ENCODE measurements at regions of chr7 and their contacts with region 1.

Region 1: GRCh38 chr7:5683280-5683670 is 98.2 kb downstream of the RNF216 start:
- DNase-seq: no peak
- ATAC-seq: no peak
- H3K4me3 ChIP-seq: no peak overlapping the region
- H3K27ac ChIP-seq: no peak overlapping the region
- H3K4me1 ChIP-seq: peaks cover 4% of the 10 kb centered on the region; the same call in 1 of the 2 replicates
- H3K27me3 ChIP-seq: no peaks in the 10 kb centered on the region
- CTCF ChIP-seq: no peak

Region 2: DNA sequence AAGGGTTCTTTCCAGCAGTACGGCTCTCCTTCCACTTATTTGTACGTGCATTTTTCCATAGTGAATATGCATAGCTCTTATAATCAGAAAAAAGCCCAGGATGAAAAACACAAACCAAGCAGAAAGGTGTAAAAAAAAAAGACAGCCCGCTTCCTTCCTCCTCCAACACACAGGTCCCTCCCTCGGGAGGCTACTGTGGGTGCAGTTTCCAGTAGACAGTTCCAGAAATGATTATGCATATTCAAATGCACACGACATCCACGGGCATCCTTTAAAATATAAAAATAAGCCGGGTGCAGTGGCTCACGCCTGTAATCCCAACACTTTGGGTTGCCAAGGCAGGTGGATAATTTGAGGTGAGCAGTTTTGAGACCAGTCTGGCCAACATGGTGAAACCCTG is 319.5 kb before region 1 on chr7:
- CTCF ChIA-PET with region 1: no interaction called
- POLR2A ChIA-PET with region 1: no interaction called
- in situ Hi-C with region 1: no loop called
- intact Hi-C with region 1: no loop called
- DNase-seq: no peak
- ATAC-seq: no peak
- H3K4me3 ChIP-seq: no peak overlapping the region
- H3K27ac ChIP-seq: no peak overlapping the region
- H3K4me1 ChIP-seq: peaks cover 7% of the 10 kb centered on the region
- H3K27me3 ChIP-seq: no peaks in the 10 kb centered on the region
- CTCF ChIP-seq: no peak

Region 3: DNA sequence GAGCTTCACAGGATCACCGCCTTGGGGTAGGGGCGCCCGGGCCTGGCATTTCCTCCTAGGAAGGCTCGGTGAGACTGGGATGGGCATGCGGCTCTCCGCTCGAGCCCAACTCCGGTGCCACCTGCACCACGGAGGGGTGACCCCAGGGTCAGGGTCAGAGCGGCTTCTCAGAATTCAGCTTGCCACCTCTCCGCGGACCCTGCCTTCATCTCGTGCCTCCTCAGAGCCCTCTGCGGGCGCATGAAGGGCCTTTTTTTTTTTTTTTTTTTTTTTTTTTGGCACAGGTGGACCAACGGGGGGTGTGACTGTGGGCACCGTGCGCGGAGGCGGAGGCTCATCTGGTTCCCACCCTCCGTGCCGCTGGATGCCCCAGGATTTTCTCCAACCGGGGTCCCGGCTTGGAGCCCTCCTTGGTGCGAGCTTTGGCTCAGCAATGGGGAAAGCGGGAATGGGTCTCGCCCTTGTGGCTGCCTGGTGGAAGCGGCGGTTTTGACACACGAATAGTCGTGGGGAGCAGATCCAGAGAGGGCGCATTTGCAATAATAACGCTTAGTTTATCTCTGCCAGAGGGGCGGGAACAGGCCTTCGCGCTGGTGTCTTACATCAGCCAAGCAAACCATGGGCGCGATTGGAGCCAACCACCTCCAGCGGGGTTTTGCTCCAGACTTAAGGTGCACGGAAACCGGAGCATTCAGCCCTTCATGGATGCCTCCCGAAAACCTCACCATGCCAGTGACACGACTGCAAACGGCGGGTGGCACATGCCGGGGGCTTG is 254.6 kb before region 1 on chr7:
- CTCF ChIA-PET with region 1: no interaction called
- POLR2A ChIA-PET with region 1: no interaction called
- in situ Hi-C with region 1: no loop called
- intact Hi-C with region 1: no loop called
- DNase-seq: no peak
- ATAC-seq: no peak
- H3K4me3 ChIP-seq: peak overlapping the region; percentile 89 to 98
- H3K27ac ChIP-seq: peak overlapping the region; percentile 99
- H3K4me1 ChIP-seq: peaks cover 8% of the 10 kb centered on the region
- H3K27me3 ChIP-seq: no peaks in the 10 kb centered on the region
- CTCF ChIP-seq: no peak

Region 4: DNA sequence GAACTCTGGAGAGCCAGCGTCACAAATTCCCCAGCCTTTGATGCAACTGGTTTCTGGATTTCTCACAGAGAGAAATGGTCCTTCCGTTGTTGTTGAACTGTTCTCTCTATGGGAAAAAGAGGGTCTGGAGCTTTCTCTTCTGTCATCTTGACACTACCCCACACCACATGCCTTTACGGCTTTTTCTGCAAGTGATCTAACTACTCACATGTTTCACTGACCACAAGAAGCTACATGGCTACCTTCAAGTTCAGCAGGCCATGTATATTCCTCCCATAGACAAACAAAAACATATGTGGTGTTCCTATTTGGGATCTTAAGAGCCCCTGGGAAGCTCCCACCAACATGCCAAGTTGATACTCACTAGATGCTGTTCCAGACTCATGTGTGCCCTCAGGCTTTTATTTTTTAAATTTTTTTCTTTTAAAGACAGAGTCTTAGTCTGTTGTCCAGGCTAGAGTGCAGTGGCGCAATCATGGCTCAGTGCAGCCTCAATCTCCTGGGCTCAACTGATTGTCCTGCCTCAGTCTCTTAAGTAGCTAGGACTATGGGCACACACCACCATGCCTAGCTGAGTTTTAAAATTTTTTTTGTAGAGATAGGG is 26.2 kb after region 1 on chr7:
- CTCF ChIA-PET with region 1: no interaction called
- POLR2A ChIA-PET with region 1: no interaction called
- in situ Hi-C with region 1: no loop called
- intact Hi-C with region 1: no loop called
- DNase-seq: no peak
- ATAC-seq: no peak
- H3K4me3 ChIP-seq: no peak overlapping the region
- H3K27ac ChIP-seq: no peak overlapping the region
- H3K4me1 ChIP-seq: no peaks in the 10 kb centered on the region
- H3K27me3 ChIP-seq: no peaks in the 10 kb centered on the region
- CTCF ChIP-seq: no peak

Region 5: DNA sequence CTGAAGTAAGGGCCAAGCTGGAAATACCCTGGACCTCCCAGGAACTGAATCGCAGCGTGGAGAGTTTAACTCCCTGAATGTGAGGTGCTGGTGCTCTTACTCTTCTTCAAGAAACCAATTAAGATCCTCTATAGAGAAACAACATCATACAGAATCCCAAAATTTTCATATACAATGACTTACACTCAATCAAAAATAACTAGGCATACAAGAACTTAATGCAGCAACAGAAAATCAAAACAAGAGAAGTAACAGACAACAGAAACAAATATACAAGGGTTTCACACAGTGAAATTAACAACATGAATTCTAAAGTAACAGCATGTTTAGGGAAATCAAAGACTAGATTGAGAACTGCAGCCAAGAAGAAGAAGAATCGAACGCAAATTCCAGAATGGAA is 60.5 kb after region 1 on chr7:
- CTCF ChIA-PET with region 1: no interaction called
- POLR2A ChIA-PET with region 1: interaction called, 12 read pairs
- in situ Hi-C with region 1: no loop called
- intact Hi-C with region 1: no loop called
- DNase-seq: no peak
- ATAC-seq: no peak
- H3K4me3 ChIP-seq: no peak overlapping the region
- H3K27ac ChIP-seq: no peak overlapping the region
- H3K4me1 ChIP-seq: no peaks in the 10 kb centered on the region
- H3K27me3 ChIP-seq: no peaks in the 10 kb centered on the region
- CTCF ChIP-seq: no peak

Region 6: GRCh38 chr7:6015917-6016652 is 332.8 kb after region 1 on chr7:
- CTCF ChIA-PET with region 1: no interaction called
- POLR2A ChIA-PET with region 1: no interaction called
- in situ Hi-C with region 1: no loop called
- intact Hi-C with region 1: no loop called
- DNase-seq: peak; percentile 28
- ATAC-seq: no peak
- H3K4me3 ChIP-seq: no peak overlapping the region
- H3K27ac ChIP-seq: peak overlapping the region; percentile 82
- H3K4me1 ChIP-seq: peaks cover 13% of the 10 kb centered on the region; the same call in 1 of the 2 replicates
- H3K27me3 ChIP-seq: no peaks in the 10 kb centered on the region
- CTCF ChIP-seq: no peak